Cardiac septum (tissue), 1 donor: ENCODE measurements at regions of chr10 and their contacts with region 1.

Region 1: GRCh38 chr10:96831867-96832720 is at the start of gene LCOR:
- DNase-seq: peak; percentile 91
- total RNA-seq, gene LCOR: 21.0 TPM

Region 2: DNA sequence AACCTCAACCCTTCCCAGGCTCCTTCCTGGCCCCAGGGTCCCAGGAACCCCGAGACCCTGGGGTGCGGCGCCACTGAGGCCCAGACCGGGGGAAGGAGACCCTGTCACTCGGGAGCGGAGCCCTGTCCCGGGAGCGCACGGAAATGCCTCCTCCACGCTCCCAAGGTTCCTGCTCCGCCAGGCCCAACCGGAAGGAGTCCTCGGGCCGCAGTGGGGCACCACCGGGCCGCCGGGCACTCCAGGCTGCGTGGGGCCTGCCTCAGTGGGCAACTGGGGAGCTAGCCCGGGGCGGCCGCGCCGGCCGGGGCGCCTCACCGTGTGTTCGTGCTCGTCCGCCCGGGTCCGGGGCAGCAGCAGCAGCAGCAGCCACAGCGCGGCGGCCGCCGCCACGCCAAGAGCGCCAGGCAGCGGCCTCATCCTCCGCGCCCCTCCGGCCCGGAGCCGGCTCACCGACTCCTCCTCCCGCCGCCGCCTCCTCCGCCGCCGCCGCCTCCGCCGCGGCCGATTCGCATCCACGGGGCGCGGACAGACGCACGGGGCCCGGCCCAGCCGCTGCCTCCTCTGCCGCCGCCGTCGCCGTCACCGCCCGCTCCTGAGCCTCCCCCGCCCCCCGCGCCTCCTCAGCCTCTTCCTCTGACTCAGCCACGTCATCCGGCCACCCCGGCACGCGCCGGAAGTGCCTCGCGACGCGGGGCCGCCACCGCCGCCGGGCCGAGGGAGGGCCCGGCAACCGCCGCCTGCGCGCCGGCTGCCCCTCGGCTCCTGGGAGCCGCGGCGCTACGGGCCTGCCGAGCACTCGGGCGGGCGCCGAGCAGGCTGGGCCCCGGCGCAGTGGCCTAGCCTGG is 245.5 kb before region 1 on chr10 and contains the start of gene TM9SF3:
- intact Hi-C with region 1: loop called (anchors 5 kb)
- DNase-seq: peak; percentile 98
- total RNA-seq, gene TM9SF3: 76.1 TPM

Region 3: DNA sequence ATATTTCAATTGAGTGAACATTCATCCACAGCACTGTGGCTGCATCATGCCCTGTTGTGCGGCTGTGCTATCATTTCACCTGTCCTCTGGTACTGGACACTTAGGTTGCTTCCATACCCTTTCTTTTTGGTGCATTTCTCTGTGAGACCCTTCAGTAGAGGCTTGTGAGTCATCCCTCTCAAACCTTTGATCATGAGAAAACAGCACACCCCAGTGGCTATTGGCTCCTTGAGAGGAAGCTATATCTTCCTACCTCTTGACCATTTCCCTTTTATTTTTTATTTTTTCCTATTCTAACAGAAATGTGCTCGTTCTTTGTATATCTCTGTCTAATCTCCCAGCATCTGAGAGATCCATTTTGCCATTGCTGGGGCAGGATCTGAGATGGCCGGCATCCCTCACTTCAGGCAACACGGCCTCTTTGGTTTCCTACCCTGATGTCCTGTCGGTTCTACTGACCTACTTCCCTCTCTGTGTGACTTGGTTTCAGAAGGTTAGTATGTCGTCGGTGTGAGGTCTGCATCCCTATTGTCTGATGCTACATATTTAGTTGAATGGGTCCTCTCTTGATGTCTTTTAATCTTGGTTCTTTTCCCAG is 88.0 kb before region 1 on chr10:
- intact Hi-C with region 1: no loop called
- DNase-seq: no peak

Region 4: GRCh38 chr10:96919785-96920430 is 87.8 kb after region 1 on chr10:
- intact Hi-C with region 1: loop called (anchors 5 kb)
- DNase-seq: no peak

Region 5: DNA sequence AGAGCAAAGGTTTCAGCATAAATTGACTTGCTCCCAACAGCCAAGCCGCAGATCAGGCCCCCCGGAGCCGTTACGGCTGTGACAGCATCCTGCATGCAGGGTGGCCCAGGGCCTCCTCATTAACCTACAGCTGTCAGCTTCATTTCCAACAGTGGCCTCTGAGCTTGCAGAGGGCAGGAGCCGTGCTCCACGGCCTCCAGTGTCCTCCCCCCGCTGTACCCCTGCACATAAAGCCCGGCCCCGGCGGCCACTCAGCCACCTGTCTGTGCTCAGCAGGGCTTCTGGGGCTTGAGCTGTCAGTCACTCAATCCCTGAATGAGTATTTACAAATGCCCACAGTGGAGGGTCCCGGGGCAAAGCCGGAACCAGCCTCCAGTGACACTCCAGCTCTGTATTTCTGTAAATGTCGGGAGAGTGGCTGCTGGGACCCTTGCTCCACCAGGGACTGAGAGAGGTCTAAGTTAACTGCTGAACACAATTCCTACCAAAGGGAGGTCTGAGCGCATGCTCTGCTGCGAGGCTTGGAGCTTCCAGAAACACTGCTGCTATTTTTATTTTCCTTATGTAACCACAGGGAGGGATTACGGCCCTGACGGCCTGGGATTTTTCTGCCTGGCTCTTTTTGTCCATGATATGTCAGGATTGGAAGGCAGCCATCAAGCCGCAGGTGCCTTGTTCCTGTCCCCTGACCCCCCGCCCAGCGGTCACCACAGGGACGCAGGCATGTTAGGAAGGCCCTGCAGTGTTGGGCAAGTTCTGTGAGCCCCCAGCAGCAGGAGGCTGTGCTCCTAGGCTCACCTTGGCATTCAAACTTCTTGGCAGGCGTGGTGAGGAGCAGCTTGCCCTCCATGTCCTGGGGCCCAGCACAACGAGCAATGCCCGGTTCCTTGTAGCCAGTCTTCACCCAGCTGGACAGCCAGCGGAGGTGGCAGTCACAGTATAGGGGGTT is 188.6 kb after region 1 on chr10:
- intact Hi-C with region 1: loop called (anchors 2 kb)
- DNase-seq: peak; percentile 75